ENCODE measurements at regions of chr10 and their contacts with region 1.

Region 1: GRCh38 chr10:103284165-103284564 is 7.2 kb downstream of the INA start:
- DNase-seq: no peak
- H3K4me3 ChIP-seq: no peak overlapping the region
- H3K4me3 Mint-ChIP-seq: no peak overlapping the region
- H3K27ac Mint-ChIP-seq: no peak overlapping the region
- H3K4me1 ChIP-seq: 0 out of 2 replicates have a peak, but pooled peaks cover 4% of the 10 kb centered on the region
- H3K4me1 Mint-ChIP-seq: peaks cover 8% of the 10 kb centered on the region
- H3K27me3 ChIP-seq: no peaks in the 10 kb centered on the region; the same call in 1 of the 2 replicates
- H3K27me3 Mint-ChIP-seq: peaks cover 9% of the 10 kb centered on the region
- CTCF ChIP-seq: no peak

Region 2: GRCh38 chr10:102678842-102679289 is 605.3 kb before region 1 on chr10:
- CTCF ChIA-PET with region 1: no interaction called
- POLR2A ChIA-PET with region 1: no interaction called
- intact Hi-C with region 1: no loop called
- DNase-seq: peak; percentile 77 to 81
- H3K4me3 ChIP-seq: no peak overlapping the region
- H3K4me3 Mint-ChIP-seq: peak overlapping the region; percentile 29
- H3K27ac Mint-ChIP-seq: no peak overlapping the region
- H3K4me1 ChIP-seq: no peaks in the 10 kb centered on the region; the same call in 1 of the 2 replicates
- H3K4me1 Mint-ChIP-seq: no peaks in the 10 kb centered on the region
- H3K27me3 ChIP-seq: no peaks in the 10 kb centered on the region
- H3K27me3 Mint-ChIP-seq: no peaks in the 10 kb centered on the region
- CTCF ChIP-seq: peak; percentile 83 to 94

Region 3: GRCh38 chr10:103013416-103013815 is 270.7 kb before region 1 on chr10:
- CTCF ChIA-PET with region 1: no interaction called
- POLR2A ChIA-PET with region 1: no interaction called
- intact Hi-C with region 1: no loop called
- DNase-seq: no peak
- H3K4me3 ChIP-seq: no peak overlapping the region
- H3K4me3 Mint-ChIP-seq: no peak overlapping the region
- H3K27ac Mint-ChIP-seq: no peak overlapping the region
- H3K4me1 ChIP-seq: no peaks in the 10 kb centered on the region
- H3K4me1 Mint-ChIP-seq: no peaks in the 10 kb centered on the region
- H3K27me3 ChIP-seq: no peaks in the 10 kb centered on the region
- H3K27me3 Mint-ChIP-seq: no peaks in the 10 kb centered on the region
- CTCF ChIP-seq: no peak

Region 4: GRCh38 chr10:103053659-103054581 is 230.2 kb before region 1 on chr10:
- CTCF ChIA-PET with region 1: interaction called, 12 read pairs
- POLR2A ChIA-PET with region 1: no interaction called
- intact Hi-C with region 1: no loop called
- DNase-seq: peak; percentile 61 to 75
- H3K4me3 ChIP-seq: no peak overlapping the region
- H3K4me3 Mint-ChIP-seq: peak overlapping the region; percentile 13
- H3K27ac Mint-ChIP-seq: no peak overlapping the region
- H3K4me1 ChIP-seq: peaks cover 7% of the 10 kb centered on the region; the same call in 1 of the 2 replicates
- H3K4me1 Mint-ChIP-seq: peaks cover 10% of the 10 kb centered on the region
- H3K27me3 ChIP-seq: no peaks in the 10 kb centered on the region
- H3K27me3 Mint-ChIP-seq: no peaks in the 10 kb centered on the region
- CTCF ChIP-seq: peak; percentile 34 to 63

Region 5: GRCh38 chr10:103168486-103169311 is 115.5 kb before region 1 on chr10:
- CTCF ChIA-PET with region 1: no interaction called
- POLR2A ChIA-PET with region 1: no interaction called
- intact Hi-C with region 1: no loop called
- DNase-seq: no peak
- H3K4me3 ChIP-seq: no peak overlapping the region
- H3K4me3 Mint-ChIP-seq: no peak overlapping the region
- H3K27ac Mint-ChIP-seq: no peak overlapping the region
- H3K4me1 ChIP-seq: 0 out of 2 replicates have a peak, but pooled peaks cover 7% of the 10 kb centered on the region
- H3K4me1 Mint-ChIP-seq: no peaks in the 10 kb centered on the region
- H3K27me3 ChIP-seq: no peaks in the 10 kb centered on the region
- H3K27me3 Mint-ChIP-seq: no peaks in the 10 kb centered on the region
- CTCF ChIP-seq: no peak

Measured in Caco-2 (cell line).